Activated CD4-positive, alpha-beta T cell treated with anti-CD3 and anti-CD28 coated beads for 36 hours (primary cell): ENCODE measurements at regions of chr10 and their contacts with region 1.

Region 1: DNA sequence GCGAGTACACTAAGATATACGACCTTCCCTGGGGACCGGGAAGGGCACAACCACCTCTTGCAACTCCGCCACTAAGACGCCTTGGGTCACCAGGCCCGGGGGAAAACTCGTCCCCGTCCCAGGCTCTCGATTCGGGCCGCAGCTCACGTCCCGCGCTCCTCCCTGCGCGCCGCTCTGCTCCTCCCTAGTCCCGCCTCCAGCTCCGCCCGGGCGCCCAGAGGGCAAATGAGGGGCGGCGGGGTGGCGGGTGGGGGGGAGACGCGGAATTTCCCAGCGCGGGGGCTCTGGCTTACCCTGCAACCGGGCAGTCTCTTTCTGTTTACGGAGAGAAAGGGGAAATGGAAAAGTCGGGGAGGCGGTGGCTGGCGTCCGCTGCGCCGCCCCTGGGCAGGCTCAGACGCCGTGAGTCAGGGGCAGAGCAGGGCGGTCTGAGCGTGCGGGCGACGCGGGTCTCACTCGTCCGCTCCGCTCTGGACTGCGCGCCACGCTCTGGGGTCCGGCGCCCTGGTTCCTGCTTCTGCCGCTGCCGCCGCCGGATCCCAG is at the start of gene MAP3K8:
- DNase-seq: peak; percentile 93
- ATAC-seq: peak; percentile 73
- H3K4me3 Mint-ChIP-seq: peak within 1 kb of the TSS; percentile 92
- H3K27ac Mint-ChIP-seq: peak within 1 kb of the TSS; percentile 74
- H3K4me1 Mint-ChIP-seq: peaks cover 46% of the 10 kb centered on the region
- H3K27me3 Mint-ChIP-seq: no peaks in the 10 kb centered on the region
- total RNA-seq, gene MAP3K8: 19.9 to 22.9 TPM

Region 2: GRCh38 chr10:29658984-29659965 is 774.5 kb before region 1 on chr10:
- CTCF ChIA-PET with region 1: no interaction called
- POLR2A ChIA-PET with region 1: no interaction called
- intact Hi-C with region 1: loop called in 1 of 2 experiments (anchors 5 kb)
- DNase-seq: peak; percentile 76
- ATAC-seq: peak; percentile 99
- H3K4me3 Mint-ChIP-seq: peak overlapping the region; percentile 32
- H3K27ac Mint-ChIP-seq: peak overlapping the region; percentile 6
- H3K4me1 Mint-ChIP-seq: peaks cover 40% of the 10 kb centered on the region
- H3K27me3 Mint-ChIP-seq: peaks cover 4% of the 10 kb centered on the region

Region 3: GRCh38 chr10:30348378-30348776 is 85.4 kb before region 1 on chr10:
- CTCF ChIA-PET with region 1: no interaction called
- POLR2A ChIA-PET with region 1: no interaction called
- intact Hi-C with region 1: loop called in 1 of 2 experiments (anchors 2 kb)
- DNase-seq: no peak
- ATAC-seq: peak; percentile 28
- H3K4me3 Mint-ChIP-seq: peak overlapping the region; percentile 91
- H3K27ac Mint-ChIP-seq: peak overlapping the region; percentile 98
- H3K4me1 Mint-ChIP-seq: peaks cover 38% of the 10 kb centered on the region
- H3K27me3 Mint-ChIP-seq: no peaks in the 10 kb centered on the region

Region 4: GRCh38 chr10:30493609-30494530 is 60.1 kb after region 1 on chr10:
- CTCF ChIA-PET with region 1: no interaction called
- POLR2A ChIA-PET with region 1: interaction called, 3 read pairs
- intact Hi-C with region 1: loop called in 1 of 2 experiments (anchors 5 kb)
- DNase-seq: peak; percentile 18
- ATAC-seq: peak; percentile 65
- H3K4me3 Mint-ChIP-seq: no peak overlapping the region
- H3K27ac Mint-ChIP-seq: no peak overlapping the region
- H3K4me1 Mint-ChIP-seq: peaks cover 39% of the 10 kb centered on the region
- H3K27me3 Mint-ChIP-seq: peaks cover 2% of the 10 kb centered on the region

Region 5: DNA sequence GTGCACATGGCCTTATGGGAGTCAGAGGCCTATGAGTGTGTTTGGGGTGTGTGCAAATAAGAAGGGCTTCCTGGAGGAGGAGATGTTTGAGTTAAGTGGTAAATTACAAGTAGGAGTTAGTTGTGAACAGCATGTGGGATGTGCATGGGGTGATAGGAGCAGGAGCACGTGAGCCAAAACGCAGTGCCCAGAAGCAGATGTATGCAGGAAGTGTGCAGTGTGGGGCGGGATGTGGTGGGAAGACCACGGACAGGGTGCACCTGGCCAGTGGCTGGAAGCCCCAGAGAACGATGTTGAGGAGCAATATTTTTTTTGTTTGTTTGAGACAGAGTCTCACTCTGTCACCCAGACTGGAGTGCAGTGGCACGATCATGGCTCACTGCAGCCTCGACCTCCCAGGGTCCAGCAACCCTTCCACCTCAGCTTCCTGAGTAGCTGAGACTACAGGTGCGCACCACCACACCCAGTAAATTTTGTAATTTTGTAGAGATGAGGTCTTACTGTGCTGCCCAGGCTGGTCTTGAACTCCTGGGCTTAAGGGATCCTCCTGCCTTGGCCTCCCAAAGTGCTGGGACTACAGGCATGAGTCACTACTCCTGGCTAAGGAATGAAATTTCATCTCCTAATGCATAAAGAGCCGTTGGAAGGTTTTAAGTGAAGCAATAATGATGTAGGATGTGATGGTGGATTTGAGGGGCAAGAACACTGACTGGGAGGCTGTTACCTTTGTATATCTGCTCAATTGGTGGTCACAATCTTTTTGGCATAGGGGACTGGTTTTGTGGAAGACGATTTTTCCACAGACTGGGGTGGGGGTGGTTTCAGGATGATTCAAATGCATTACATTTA is 117.4 kb after region 1 on chr10:
- CTCF ChIA-PET with region 1: no interaction called
- POLR2A ChIA-PET with region 1: no interaction called
- intact Hi-C with region 1: no loop called
- DNase-seq: no peak
- ATAC-seq: no peak
- H3K4me3 Mint-ChIP-seq: no peak overlapping the region
- H3K27ac Mint-ChIP-seq: no peak overlapping the region
- H3K4me1 Mint-ChIP-seq: peaks cover 2% of the 10 kb centered on the region
- H3K27me3 Mint-ChIP-seq: peaks cover 2% of the 10 kb centered on the region

Region 6: GRCh38 chr10:30687698-30688219 is 254.0 kb after region 1 on chr10:
- CTCF ChIA-PET with region 1: interaction called, 3 read pairs
- POLR2A ChIA-PET with region 1: no interaction called
- intact Hi-C with region 1: loop called in 1 of 2 experiments (anchors 1 kb)
- DNase-seq: peak; percentile 90
- ATAC-seq: peak; percentile 58
- H3K4me3 Mint-ChIP-seq: peak overlapping the region; percentile 43
- H3K27ac Mint-ChIP-seq: peak overlapping the region; percentile 75
- H3K4me1 Mint-ChIP-seq: peaks cover 70% of the 10 kb centered on the region
- H3K27me3 Mint-ChIP-seq: peaks cover 13% of the 10 kb centered on the region

Region 7: DNA sequence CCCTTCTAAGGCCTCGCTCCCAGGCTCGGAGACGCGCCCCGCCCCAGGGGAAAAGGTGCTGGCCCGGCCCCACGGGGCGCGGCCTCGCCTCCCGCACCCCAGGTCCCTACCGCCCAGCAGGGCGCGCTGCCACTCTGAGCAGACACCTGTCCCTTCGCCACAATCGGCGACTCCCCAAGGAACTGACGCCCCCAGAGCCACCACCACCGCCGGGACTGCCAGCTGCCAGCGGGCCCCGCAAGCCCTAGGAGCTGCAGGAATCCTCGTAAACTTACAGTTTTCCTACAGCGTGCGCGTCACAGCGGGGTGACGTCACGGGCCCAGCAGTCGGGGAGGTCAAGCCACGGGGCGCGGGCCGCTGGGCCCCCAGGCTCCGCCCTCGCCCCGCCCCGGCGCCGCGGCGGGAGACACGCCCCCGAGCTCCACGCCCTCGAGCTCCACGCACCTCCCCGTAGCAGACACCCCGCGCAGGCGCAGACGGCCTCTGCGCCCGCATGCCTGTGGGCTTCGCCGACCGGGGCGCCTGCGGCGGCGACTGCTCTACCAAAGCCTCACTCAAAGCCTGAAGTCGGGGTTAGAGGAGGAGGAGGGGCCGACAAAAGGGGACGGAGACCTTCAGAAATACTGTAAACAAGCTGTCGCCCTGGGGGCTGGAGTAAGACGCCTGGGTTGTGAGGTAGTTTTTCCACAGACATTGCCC is 597.9 kb after region 1 on chr10 and contains the start of gene ZNF438:
- CTCF ChIA-PET with region 1: no interaction called
- POLR2A ChIA-PET with region 1: no interaction called
- intact Hi-C with region 1: loop called in 1 of 2 experiments (anchors 5 kb)
- DNase-seq: peak; percentile 96
- ATAC-seq: peak; percentile 81
- H3K4me3 Mint-ChIP-seq: peak within 1 kb of the TSS; percentile 81
- H3K27ac Mint-ChIP-seq: peak within 1 kb of the TSS; percentile 99
- H3K4me1 Mint-ChIP-seq: peaks cover 19% of the 10 kb centered on the region
- H3K27me3 Mint-ChIP-seq: no peaks in the 10 kb centered on the region
- total RNA-seq, gene ZNF438: 3.1 to 3.7 TPM

Region 8: GRCh38 chr10:32055813-32056600 is 1622.2 kb after region 1 on chr10 and contains the start of gene KIF5B:
- CTCF ChIA-PET with region 1: no interaction called
- POLR2A ChIA-PET with region 1: no interaction called
- intact Hi-C with region 1: loop called in 1 of 2 experiments (anchors 5 kb)
- DNase-seq: peak; percentile 92
- ATAC-seq: peak; percentile 92
- H3K4me3 Mint-ChIP-seq: peak within 1 kb of the TSS; percentile 97
- H3K27ac Mint-ChIP-seq: peak within 1 kb of the TSS; percentile 96
- H3K4me1 Mint-ChIP-seq: peaks cover 37% of the 10 kb centered on the region
- H3K27me3 Mint-ChIP-seq: no peaks in the 10 kb centered on the region
- total RNA-seq, gene KIF5B: 57.4 to 59.9 TPM